SK-N-SH (cell line): ENCODE measurements at regions of chr10 and their contacts with region 1.

Region 1: DNA sequence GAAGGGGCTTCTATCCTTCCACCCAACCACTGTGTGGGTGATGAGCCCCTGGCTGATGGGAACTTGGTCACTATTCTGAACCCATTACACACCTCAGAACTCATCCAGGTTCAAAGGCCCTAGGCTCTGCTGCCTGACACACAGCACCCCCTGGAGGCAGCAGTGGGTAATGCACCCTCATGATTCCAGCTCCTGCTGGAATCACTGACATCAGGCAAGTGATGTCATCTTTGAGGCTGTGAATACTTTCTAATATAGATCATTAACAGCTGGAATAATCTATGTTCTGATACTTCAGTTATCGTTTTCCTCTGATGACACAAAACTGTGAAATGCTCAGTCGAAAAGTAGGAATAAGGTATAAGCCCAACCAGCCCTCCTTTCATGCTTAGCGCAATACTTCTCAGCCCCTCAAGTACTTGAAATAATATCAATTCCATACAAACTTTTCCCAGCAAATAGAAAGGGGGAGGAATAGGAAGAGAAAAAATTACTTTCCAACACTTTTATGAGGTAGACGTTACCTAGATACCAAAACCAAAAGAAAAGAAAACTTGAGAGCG is 7.5 kb upstream of the RBP3 start:
- DNase-seq: peak; percentile 83
- H3K4me3 ChIP-seq: peak overlapping the region in 1 of 2 experiments; percentile 46; a peak in 1 of 4 replicates
- H3K27ac ChIP-seq: no peak overlapping the region; a peak in 1 of 4 replicates
- H3K4me1 ChIP-seq: peaks cover 0 to 10% of the 10 kb centered on the region in 2 experiments; a peak in 1 of 4 replicates
- H3K27me3 ChIP-seq: peaks cover 32% of the 10 kb centered on the region
- CTCF ChIP-seq: peak; percentile 94
- EP300 ChIP-seq: no peak
- RAD21 ChIP-seq: peak; percentile 84

Region 2: DNA sequence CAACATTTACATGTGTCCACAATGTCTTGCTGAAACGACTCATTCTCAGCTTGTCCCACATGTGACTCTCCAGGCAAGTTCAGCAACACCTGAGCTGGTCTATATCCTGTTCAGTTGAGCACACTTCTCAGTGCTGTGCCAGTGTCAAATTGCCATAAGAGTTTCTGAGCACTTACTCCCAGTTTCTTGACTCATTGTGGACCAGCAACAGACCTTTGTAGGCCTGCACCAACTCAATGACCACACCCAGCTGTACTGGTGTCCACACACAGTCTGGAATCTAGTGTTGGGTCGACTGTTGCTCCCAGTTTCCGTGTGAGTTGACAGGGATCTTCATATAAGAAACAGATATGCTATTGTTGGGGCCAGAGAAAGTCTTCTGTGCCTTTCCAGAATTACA is 341.5 kb before region 1 on chr10:
- CTCF ChIA-PET with region 1: interaction called, 18 read pairs
- POLR2A ChIA-PET with region 1: no interaction called
- DNase-seq: no peak
- H3K4me3 ChIP-seq: no peak overlapping the region
- H3K27ac ChIP-seq: no peak overlapping the region
- H3K4me1 ChIP-seq: no peaks in the 10 kb centered on the region
- H3K27me3 ChIP-seq: no peaks in the 10 kb centered on the region
- CTCF ChIP-seq: no peak
- EP300 ChIP-seq: no peak
- RAD21 ChIP-seq: no peak

Region 3: DNA sequence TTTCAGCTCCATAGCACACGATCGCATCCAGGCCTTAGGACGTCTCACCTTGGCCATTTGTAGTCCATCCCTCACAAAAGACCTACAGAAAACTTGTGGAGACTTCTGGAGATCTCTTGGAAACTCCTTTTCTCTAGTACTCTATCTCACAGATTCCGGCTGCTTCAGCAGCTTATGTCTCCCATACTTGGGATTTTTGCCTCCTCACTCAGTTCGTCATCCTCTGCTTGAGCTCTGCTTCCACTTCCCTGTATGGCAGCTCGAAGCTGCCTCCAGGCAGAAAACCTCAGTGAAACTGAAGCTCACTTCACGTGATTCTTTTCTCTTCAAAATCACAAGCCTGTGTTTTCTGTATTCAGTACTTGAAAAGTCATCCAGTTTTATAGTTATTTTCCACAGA is 219.3 kb before region 1 on chr10:
- CTCF ChIA-PET with region 1: no interaction called
- POLR2A ChIA-PET with region 1: no interaction called
- DNase-seq: no peak
- H3K4me3 ChIP-seq: no peak overlapping the region
- H3K27ac ChIP-seq: no peak overlapping the region
- H3K4me1 ChIP-seq: no peaks in the 10 kb centered on the region; a peak in 1 of 4 replicates
- H3K27me3 ChIP-seq: no peaks in the 10 kb centered on the region; the same call in 1 of the 2 replicates
- CTCF ChIP-seq: no peak
- EP300 ChIP-seq: no peak
- RAD21 ChIP-seq: no peak

Region 4: DNA sequence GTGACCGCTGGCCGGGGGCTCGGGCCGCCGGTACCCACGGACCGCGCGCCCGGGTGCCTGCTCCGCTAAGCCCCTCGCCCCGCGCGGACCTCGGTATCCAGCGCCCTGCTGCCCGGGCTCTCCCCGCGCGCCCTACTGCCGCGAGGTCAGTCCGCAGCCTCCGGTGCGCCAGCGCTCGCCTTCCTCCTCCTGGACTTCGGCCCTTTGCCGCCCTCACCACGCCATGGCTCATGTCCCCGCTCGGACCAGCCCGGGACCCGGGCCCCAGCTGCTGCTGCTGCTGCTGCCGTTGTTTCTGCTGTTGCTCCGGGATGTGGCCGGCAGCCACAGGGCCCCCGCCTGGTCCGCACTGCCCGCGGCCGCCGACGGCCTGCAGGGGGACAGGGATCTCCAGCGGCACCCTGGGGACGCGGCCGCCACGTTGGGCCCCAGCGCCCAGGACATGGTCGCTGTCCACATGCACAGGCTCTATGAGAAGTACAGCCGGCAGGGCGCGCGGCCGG is 40.2 kb before region 1 on chr10:
- CTCF ChIA-PET with region 1: no interaction called
- POLR2A ChIA-PET with region 1: no interaction called
- DNase-seq: peak; percentile 73
- H3K4me3 ChIP-seq: peak overlapping the region in 1 of 2 experiments; percentile 49; a peak in 2 of 4 replicates
- H3K27ac ChIP-seq: peak overlapping the region in 1 of 2 experiments; percentile 71; a peak in 1 of 4 replicates
- H3K4me1 ChIP-seq: peaks cover 0 to 58% of the 10 kb centered on the region in 2 experiments; a peak in 1 of 4 replicates
- H3K27me3 ChIP-seq: peaks cover 43% of the 10 kb centered on the region
- CTCF ChIP-seq: no peak
- EP300 ChIP-seq: no peak
- RAD21 ChIP-seq: no peak

Region 5: DNA sequence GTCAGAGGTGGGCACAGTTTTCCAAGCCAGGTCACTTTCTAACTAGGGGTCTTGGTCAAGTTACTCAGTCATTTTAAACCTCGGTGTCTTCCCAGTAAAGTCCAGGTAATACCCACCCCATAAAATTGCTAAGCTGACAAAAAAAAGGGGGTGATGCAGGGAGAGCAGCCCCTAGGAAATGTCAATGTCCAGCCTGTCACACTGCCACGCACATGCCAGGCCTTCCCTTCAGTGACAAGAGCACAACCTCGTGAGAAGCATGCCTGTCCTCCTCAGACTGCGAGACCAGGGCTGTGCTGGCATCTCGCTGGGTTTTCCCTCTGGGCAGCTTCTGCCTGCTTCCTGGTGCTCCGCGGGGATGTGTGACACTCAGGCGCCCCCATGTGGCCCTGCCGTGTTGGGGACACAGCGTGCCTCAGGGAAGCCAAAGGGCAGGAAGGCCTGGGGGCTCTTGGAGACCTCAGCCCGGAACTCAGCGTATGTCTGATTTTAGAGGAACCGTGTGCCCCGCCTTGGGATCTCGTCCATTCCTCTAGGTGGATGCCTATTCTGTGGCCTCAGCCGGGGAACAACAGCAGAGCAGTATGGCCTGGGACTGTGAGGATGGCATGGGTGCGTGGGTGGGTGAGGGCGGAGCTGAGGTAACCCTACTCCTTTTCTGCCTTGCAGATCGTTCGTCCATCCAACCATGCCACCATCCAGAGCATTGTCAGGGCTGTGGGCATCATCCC is 28.6 kb before region 1 on chr10:
- CTCF ChIA-PET with region 1: interaction called, 18 read pairs
- POLR2A ChIA-PET with region 1: no interaction called
- DNase-seq: peak; percentile 90
- H3K4me3 ChIP-seq: peak overlapping the region in 1 of 2 experiments; percentile 46; a peak in 1 of 4 replicates
- H3K27ac ChIP-seq: peak overlapping the region in 1 of 2 experiments; percentile 36; a peak in 2 of 4 replicates
- H3K4me1 ChIP-seq: peaks cover 0 to 51% of the 10 kb centered on the region in 2 experiments; a peak in 1 of 4 replicates
- H3K27me3 ChIP-seq: no peaks in the 10 kb centered on the region
- CTCF ChIP-seq: peak; percentile 80
- EP300 ChIP-seq: no peak
- RAD21 ChIP-seq: peak; percentile 97

Region 6: DNA sequence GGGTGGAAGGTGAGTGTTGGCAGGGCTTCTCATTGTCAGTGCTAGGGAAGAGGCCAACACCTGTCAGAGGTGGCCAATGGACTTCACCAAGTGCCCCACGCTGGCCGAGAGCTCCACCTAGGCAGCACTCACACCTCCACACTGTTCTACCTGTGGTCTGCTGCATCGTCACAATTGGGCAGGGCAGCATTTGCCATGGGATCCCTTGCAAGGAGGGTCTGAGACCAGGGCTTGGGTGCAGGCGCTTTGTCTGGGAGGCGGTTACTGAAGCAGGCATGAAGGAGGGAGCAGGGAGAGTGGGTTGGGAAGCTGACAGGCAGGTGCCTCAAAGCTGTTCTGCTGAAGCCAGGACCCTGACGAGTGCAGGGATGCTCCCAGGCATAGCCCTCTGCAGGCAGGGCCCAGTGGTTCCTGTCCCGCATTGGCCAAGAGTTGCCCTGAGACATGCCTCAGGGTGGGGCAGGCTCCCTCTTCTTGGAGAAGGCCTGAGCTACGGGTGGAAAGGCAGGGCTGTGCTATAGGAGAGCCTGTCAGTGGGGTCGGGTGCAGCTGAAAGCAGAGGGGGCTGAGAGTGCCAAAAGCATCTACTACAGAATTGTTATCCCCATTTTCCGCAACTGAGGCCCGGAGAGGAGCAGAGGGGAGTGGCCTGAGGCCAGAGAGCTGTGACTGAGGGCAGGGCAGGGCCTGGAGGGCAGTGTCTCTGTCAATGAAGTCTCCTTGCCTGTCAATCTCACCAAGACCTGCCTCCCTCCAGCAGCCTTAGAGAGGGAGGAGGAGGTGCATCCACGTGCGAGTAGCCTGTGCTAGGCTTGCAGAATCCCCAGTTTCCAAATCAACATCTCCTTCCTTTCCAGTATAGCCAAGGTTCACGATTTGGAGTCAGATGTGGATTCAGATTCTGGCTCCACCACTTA is 11.5 kb after region 1 on chr10:
- CTCF ChIA-PET with region 1: interaction called, 23 read pairs
- POLR2A ChIA-PET with region 1: no interaction called
- DNase-seq: no peak
- H3K4me3 ChIP-seq: no peak overlapping the region
- H3K27ac ChIP-seq: no peak overlapping the region
- H3K4me1 ChIP-seq: peaks cover 0 to 23% of the 10 kb centered on the region in 2 experiments; a peak in 2 of 4 replicates
- H3K27me3 ChIP-seq: peaks cover 10% of the 10 kb centered on the region
- CTCF ChIP-seq: no peak
- EP300 ChIP-seq: no peak
- RAD21 ChIP-seq: no peak

Region 7: GRCh38 chr10:47374611-47375536 is 34.2 kb after region 1 on chr10:
- CTCF ChIA-PET with region 1: interaction called, 12 read pairs
- POLR2A ChIA-PET with region 1: no interaction called
- DNase-seq: no peak
- H3K4me3 ChIP-seq: no peak overlapping the region
- H3K27ac ChIP-seq: no peak overlapping the region
- H3K4me1 ChIP-seq: peaks cover 0 to 28% of the 10 kb centered on the region in 2 experiments; a peak in 2 of 4 replicates
- H3K27me3 ChIP-seq: no peaks in the 10 kb centered on the region
- CTCF ChIP-seq: no peak
- EP300 ChIP-seq: no peak
- RAD21 ChIP-seq: no peak

Region 8: DNA sequence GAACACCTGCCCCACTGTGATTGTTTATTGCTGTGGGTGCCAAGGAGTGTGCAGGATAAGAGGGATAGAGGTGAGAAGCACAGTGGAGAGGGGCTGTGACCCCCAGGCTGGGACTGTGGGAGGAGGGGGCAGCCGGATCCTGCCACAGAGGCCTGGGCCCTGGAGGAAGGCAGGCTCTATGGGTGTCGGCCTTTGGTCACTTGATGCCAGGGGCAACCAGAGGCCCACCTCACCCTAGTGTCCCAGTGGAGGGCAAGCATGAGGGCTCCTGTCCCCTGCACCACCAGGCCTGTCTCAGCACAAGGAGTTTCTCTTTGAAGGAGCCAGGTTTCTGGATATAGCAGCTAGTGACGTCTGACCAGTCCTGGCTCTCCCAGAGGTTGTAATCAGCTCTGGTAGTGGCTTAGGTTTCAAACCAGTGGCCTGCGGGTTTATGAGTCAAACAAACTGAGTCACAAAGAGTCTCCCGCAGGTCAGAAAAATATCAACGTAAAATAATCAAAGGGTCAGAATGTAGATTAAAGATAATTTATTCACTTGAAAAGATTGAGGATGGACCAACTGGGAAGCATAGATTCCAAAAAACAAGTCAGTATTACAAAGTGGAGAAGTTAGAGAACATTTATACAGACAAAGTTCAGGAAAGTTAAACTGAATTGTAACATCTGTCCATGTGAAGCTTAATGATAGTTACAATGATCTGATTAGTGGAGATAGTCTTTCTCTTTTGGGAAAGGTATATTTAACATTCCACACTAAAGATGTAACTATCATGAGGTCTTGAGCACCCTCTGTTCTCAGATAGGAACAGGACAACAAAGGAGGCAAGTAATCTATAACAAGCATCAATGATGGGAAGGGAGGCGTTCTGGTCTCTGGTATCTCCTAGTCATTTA is 80.6 kb after region 1 on chr10:
- CTCF ChIA-PET with region 1: no interaction called
- POLR2A ChIA-PET with region 1: no interaction called
- DNase-seq: no peak
- H3K4me3 ChIP-seq: no peak overlapping the region
- H3K27ac ChIP-seq: no peak overlapping the region
- H3K4me1 ChIP-seq: no peaks in the 10 kb centered on the region; a peak in 1 of 4 replicates
- H3K27me3 ChIP-seq: no peaks in the 10 kb centered on the region
- CTCF ChIP-seq: no peak
- EP300 ChIP-seq: no peak
- RAD21 ChIP-seq: no peak

Region 9: GRCh38 chr10:47435081-47435480 is 94.4 kb after region 1 on chr10:
- CTCF ChIA-PET with region 1: no interaction called
- POLR2A ChIA-PET with region 1: no interaction called
- DNase-seq: no peak
- H3K4me3 ChIP-seq: no peak overlapping the region
- H3K27ac ChIP-seq: no peak overlapping the region
- H3K4me1 ChIP-seq: no peaks in the 10 kb centered on the region
- H3K27me3 ChIP-seq: peaks cover 22% of the 10 kb centered on the region
- CTCF ChIP-seq: no peak
- EP300 ChIP-seq: no peak
- RAD21 ChIP-seq: no peak